CD4-positive, alpha-beta T cell (primary cell): ENCODE measurements at regions of chr11 and their contacts with region 1.

Region 1: GRCh38 chr11:33015621-33016551 is at the start of gene DEPDC7:
- DNase-seq: peak; percentile 57 to 89 (median 74)
- ATAC-seq: peak; percentile 76
- H3K4me3 ChIP-seq: peak within 1 kb of the TSS; percentile 57
- H3K4me3 Mint-ChIP-seq: peak within 1 kb of the TSS; percentile 96
- H3K27ac ChIP-seq: no peak within 1 kb of the TSS
- H3K27ac Mint-ChIP-seq: peak within 1 kb of the TSS; percentile 73
- H3K4me1 ChIP-seq: peaks cover 30% of the 10 kb centered on the region
- H3K4me1 Mint-ChIP-seq: peaks cover 55% of the 10 kb centered on the region
- H3K27me3 ChIP-seq: peaks cover 12 to 15% of the 10 kb centered on the region in 2 experiments
- H3K27me3 Mint-ChIP-seq: peaks cover 10% of the 10 kb centered on the region
- CTCF ChIP-seq: no peak
- total RNA-seq, gene DEPDC7: 2.9 to 3.1 TPM

Region 2: DNA sequence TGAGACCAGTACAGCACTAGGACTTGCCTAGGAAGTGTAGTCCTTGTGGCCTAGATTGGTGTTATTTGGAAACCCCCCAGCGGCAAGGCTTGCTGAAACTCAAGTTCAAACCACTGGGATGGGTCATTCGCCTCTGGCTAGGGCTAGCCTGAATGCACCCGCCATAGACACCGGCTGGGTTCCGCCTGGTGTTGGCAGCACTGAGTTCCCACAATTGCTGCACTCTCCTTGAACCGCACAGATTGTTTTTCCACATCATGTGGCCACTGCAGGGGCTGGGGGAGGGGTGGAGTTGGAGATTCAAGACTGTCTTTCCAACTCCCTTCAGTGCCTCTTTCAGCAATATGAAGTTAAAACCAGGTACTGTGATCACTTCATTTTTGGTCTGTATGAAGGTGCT is 264.5 kb before region 1 on chr11:
- CTCF ChIA-PET with region 1: no interaction called
- POLR2A ChIA-PET with region 1: no interaction called
- intact Hi-C with region 1: no loop called
- DNase-seq: no peak
- ATAC-seq: no peak
- H3K4me3 ChIP-seq: no peak overlapping the region
- H3K4me3 Mint-ChIP-seq: no peak overlapping the region
- H3K27ac ChIP-seq: no peak overlapping the region
- H3K27ac Mint-ChIP-seq: no peak overlapping the region
- H3K4me1 ChIP-seq: no peaks in the 10 kb centered on the region
- H3K4me1 Mint-ChIP-seq: no peaks in the 10 kb centered on the region
- H3K27me3 ChIP-seq: peaks cover 4% of the 10 kb centered on the region in 2 experiments
- H3K27me3 Mint-ChIP-seq: peaks cover 21% of the 10 kb centered on the region
- CTCF ChIP-seq: no peak

Region 3: DNA sequence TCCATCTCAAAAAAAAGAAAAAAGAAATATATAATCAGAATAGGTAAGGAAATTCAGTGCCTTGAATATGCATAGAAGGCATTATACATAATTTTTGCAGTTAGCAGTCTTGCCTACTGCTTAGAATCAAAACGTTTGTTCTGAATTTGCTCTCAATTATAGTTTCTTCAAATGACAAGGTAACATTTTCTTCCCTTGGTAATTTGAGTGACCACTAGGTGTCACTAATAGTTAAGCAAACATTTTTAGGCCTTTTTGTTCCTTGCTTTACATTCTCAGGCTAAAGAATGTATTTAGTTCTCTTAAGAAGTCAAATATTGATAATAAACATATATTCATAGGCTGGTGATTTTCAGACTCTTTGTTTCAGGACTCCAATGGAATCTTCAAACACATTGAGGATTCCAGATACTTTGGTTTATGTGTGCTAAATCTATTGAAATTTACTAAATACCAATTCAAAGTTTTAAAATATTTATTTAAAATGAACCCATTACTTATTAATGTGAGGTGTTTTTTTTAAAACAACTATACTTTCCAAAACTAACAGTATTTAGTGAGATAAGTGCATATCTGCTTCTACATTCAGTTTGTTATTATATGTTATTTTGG is 55.2 kb before region 1 on chr11:
- CTCF ChIA-PET with region 1: no interaction called
- POLR2A ChIA-PET with region 1: no interaction called
- intact Hi-C with region 1: loop called in 1 of 2 experiments (anchors 5 kb)
- DNase-seq: peak in 3 of 14 experiments; percentile 63 to 73 (median 73)
- ATAC-seq: no peak
- H3K4me3 ChIP-seq: no peak overlapping the region
- H3K4me3 Mint-ChIP-seq: no peak overlapping the region
- H3K27ac ChIP-seq: no peak overlapping the region
- H3K27ac Mint-ChIP-seq: no peak overlapping the region
- H3K4me1 ChIP-seq: no peaks in the 10 kb centered on the region
- H3K4me1 Mint-ChIP-seq: no peaks in the 10 kb centered on the region
- H3K27me3 ChIP-seq: no peaks in the 10 kb centered on the region
- H3K27me3 Mint-ChIP-seq: no peaks in the 10 kb centered on the region
- CTCF ChIP-seq: peak; percentile 81

Region 4: GRCh38 chr11:33027846-33028536 is 12.1 kb after region 1 on chr11:
- CTCF ChIA-PET with region 1: no interaction called
- POLR2A ChIA-PET with region 1: interaction called, 15 read pairs
- intact Hi-C with region 1: no loop called
- DNase-seq: no peak
- ATAC-seq: no peak
- H3K4me3 ChIP-seq: no peak overlapping the region
- H3K4me3 Mint-ChIP-seq: no peak overlapping the region
- H3K27ac ChIP-seq: no peak overlapping the region
- H3K27ac Mint-ChIP-seq: no peak overlapping the region
- H3K4me1 ChIP-seq: no peaks in the 10 kb centered on the region
- H3K4me1 Mint-ChIP-seq: no peaks in the 10 kb centered on the region
- H3K27me3 ChIP-seq: no peaks in the 10 kb centered on the region
- H3K27me3 Mint-ChIP-seq: no peaks in the 10 kb centered on the region
- CTCF ChIP-seq: no peak

Region 5: GRCh38 chr11:33264926-33265325 is 249.0 kb after region 1 on chr11:
- CTCF ChIA-PET with region 1: no interaction called
- POLR2A ChIA-PET with region 1: no interaction called
- intact Hi-C with region 1: no loop called
- DNase-seq: no peak
- ATAC-seq: no peak
- H3K4me3 ChIP-seq: no peak overlapping the region
- H3K4me3 Mint-ChIP-seq: no peak overlapping the region
- H3K27ac ChIP-seq: no peak overlapping the region
- H3K27ac Mint-ChIP-seq: no peak overlapping the region
- H3K4me1 ChIP-seq: peaks cover 18% of the 10 kb centered on the region
- H3K4me1 Mint-ChIP-seq: peaks cover 62% of the 10 kb centered on the region
- H3K27me3 ChIP-seq: no peaks in the 10 kb centered on the region
- H3K27me3 Mint-ChIP-seq: no peaks in the 10 kb centered on the region
- CTCF ChIP-seq: no peak